CD4-positive, alpha-beta memory T cell (primary cell): ENCODE measurements at regions of chr3 and their contacts with region 1.

Region 1: GRCh38 chr3:30768703-30769685 is 125.5 kb downstream of the GADL1 start:
- DNase-seq: peak; percentile 54 to 62 (median 56)
- H3K4me3 ChIP-seq: no peak overlapping the region
- H3K4me3 Mint-ChIP-seq: no peak overlapping the region
- H3K27ac ChIP-seq: no peak overlapping the region
- H3K27ac Mint-ChIP-seq: peak overlapping the region in 1 of 7 donors; percentile 4
- H3K4me1 ChIP-seq: no peaks in the 10 kb centered on the region
- H3K4me1 Mint-ChIP-seq: peaks cover 0 to 4% (median 2%) of the 10 kb centered on the region in 4 donors
- H3K27me3 ChIP-seq: no peaks in the 10 kb centered on the region
- H3K27me3 Mint-ChIP-seq: peaks cover 2 to 5% of the 10 kb centered on the region in 2 donors

Region 2: GRCh38 chr3:30042274-30042859 is 726.6 kb before region 1 on chr3:
- CTCF ChIA-PET with region 1: interaction called, 8 read pairs
- POLR2A ChIA-PET with region 1: no interaction called
- intact Hi-C with region 1: loop called (anchors 5 kb)
- DNase-seq: peak; percentile 43 to 55 (median 44)
- H3K4me3 ChIP-seq: no peak overlapping the region
- H3K4me3 Mint-ChIP-seq: no peak overlapping the region
- H3K27ac ChIP-seq: no peak overlapping the region
- H3K27ac Mint-ChIP-seq: no peak overlapping the region
- H3K4me1 ChIP-seq: no peaks in the 10 kb centered on the region
- H3K4me1 Mint-ChIP-seq: no peaks in the 10 kb centered on the region
- H3K27me3 ChIP-seq: peaks cover 2% of the 10 kb centered on the region
- H3K27me3 Mint-ChIP-seq: peaks cover 24 to 26% of the 10 kb centered on the region in 2 donors

Region 3: DNA sequence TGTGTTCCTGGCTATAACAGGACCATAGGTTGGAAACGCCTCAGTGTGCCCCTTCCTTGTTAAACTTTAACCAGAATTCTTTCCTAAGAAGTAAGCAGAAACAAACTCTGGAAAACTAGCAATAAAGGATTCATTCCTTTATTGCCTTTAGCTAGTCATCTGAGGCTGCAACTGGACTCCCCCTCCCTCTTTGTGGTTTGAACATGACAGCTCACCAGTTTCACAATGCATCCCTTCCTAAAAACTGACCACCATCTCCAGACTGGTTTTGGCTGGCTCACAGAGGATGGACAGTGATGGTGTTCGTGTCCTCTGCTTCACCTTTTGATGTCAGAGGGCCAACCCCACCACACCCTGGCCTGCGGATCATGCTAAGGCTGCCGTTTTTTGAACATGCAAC is 190.5 kb before region 1 on chr3:
- CTCF ChIA-PET with region 1: no interaction called
- POLR2A ChIA-PET with region 1: no interaction called
- intact Hi-C with region 1: no loop called
- DNase-seq: no peak
- H3K4me3 ChIP-seq: no peak overlapping the region
- H3K4me3 Mint-ChIP-seq: no peak overlapping the region
- H3K27ac ChIP-seq: no peak overlapping the region
- H3K27ac Mint-ChIP-seq: no peak overlapping the region
- H3K4me1 ChIP-seq: no peaks in the 10 kb centered on the region
- H3K4me1 Mint-ChIP-seq: no peaks in the 10 kb centered on the region
- H3K27me3 ChIP-seq: no peaks in the 10 kb centered on the region
- H3K27me3 Mint-ChIP-seq: no peaks in the 10 kb centered on the region

Region 4: DNA sequence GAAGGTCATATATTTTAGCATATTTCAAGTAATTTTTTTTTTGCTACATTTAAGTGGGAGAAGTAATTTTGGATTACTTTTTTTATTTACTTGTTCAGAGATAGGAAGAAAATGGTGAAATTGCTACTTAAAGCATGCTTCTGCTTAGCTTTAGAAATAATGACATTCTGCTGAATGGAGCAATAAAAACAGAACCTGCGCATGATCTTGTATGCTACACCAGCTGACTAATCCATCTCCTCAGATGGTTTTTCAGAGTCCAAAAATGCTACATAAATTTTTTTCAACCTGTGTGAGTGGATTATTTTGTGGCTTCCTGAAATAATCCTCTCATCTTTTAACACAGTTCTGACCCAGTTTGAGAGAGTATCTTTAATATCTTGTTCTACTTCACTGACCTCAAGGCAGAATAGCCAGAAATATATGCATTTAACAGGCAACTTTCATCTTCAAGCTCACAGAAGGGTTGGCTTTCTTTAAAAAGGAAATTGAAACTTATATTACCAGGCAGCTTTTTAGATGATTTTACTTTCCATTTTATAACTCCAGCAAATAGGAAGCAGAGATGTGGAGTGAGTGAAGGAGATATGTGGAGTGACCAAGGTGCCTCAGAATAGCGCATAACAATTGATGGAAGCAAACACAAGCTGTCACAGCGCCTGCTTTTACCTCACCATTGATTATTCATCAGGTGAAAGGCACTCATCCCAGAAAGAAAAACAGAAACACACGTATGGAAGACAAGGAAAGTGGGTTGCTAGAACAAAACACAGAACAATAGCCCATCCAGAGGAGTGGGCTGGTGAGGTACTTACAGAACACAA is 26.0 kb before region 1 on chr3:
- CTCF ChIA-PET with region 1: no interaction called
- POLR2A ChIA-PET with region 1: no interaction called
- intact Hi-C with region 1: no loop called
- DNase-seq: no peak
- H3K4me3 ChIP-seq: no peak overlapping the region
- H3K4me3 Mint-ChIP-seq: no peak overlapping the region
- H3K27ac ChIP-seq: no peak overlapping the region
- H3K27ac Mint-ChIP-seq: peak overlapping the region in 1 of 7 donors; percentile 15
- H3K4me1 ChIP-seq: no peaks in the 10 kb centered on the region
- H3K4me1 Mint-ChIP-seq: peaks cover 0 to 3% (median under 1%) of the 10 kb centered on the region in 4 donors
- H3K27me3 ChIP-seq: no peaks in the 10 kb centered on the region
- H3K27me3 Mint-ChIP-seq: no peaks in the 10 kb centered on the region

Region 5: DNA sequence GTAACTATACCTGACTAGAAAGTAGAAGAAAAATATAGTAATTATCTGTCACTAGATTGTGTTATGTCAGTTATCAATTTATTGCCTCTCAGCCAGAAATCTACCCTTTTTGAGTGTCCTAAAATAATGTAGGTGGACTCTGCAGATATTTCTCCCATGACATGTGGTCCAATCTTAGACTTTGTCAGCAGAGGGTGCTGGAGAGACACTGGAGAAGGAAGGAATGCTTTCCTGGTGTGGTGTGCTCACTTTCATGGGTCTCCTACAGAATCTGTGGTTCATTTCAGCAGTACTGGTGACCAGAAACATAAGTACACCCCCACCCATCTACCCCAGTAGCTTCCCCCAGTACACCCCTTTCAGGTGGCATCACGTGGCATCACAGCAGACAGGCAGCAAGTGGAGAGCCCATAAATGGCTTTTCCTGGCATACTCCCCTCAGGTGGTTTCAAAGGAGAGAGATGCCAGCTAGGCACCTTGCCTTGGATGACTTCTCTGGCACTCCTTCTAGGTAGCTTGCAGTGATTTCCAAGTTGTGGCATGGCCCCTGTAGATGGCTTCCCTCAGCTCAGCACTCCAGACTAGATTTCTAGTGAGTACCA is 10.8 kb after region 1 on chr3:
- CTCF ChIA-PET with region 1: interaction called, 23 read pairs
- POLR2A ChIA-PET with region 1: no interaction called
- intact Hi-C with region 1: no loop called
- DNase-seq: peak in 2 of 5 donors; percentile 8 to 9
- H3K4me3 ChIP-seq: no peak overlapping the region
- H3K4me3 Mint-ChIP-seq: no peak overlapping the region
- H3K27ac ChIP-seq: no peak overlapping the region
- H3K27ac Mint-ChIP-seq: no peak overlapping the region
- H3K4me1 ChIP-seq: no peaks in the 10 kb centered on the region
- H3K4me1 Mint-ChIP-seq: no peaks in the 10 kb centered on the region
- H3K27me3 ChIP-seq: no peaks in the 10 kb centered on the region
- H3K27me3 Mint-ChIP-seq: peaks cover 0 to 8% of the 10 kb centered on the region in 2 donors

Region 6: DNA sequence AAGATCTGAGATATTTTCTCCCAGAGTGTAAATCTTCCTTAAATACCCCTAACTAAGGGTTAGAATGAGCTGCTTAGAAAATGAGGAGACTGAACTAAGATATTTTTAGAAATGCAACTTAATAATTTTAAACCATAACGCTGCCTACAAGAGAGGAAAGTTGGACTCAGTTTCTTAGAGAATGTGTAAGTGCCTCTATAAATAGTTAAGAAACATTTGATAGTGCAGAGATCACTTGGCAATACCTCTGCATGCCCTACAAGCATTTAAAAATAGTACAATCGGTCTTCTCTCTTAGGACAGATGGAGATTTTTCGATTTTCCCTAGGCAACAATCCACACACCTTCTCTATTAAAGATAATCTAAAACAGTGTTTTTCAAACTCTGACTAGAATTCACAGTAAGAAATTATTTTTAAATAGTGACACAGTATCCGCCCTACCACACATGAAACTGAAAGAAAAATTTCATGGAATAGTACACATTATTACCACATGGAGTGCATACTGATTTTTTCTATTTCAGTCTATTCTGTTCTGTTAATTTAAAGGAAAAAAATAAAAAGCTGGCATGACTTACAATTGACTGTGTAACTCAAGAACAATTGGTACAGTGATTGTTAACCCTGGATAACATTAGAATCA is 42.3 kb after region 1 on chr3:
- CTCF ChIA-PET with region 1: no interaction called
- POLR2A ChIA-PET with region 1: no interaction called
- intact Hi-C with region 1: no loop called
- DNase-seq: no peak
- H3K4me3 ChIP-seq: no peak overlapping the region
- H3K4me3 Mint-ChIP-seq: no peak overlapping the region
- H3K27ac ChIP-seq: no peak overlapping the region
- H3K27ac Mint-ChIP-seq: peak overlapping the region in 1 of 7 donors; percentile 48
- H3K4me1 ChIP-seq: no peaks in the 10 kb centered on the region
- H3K4me1 Mint-ChIP-seq: peaks cover 0 to 2% (median under 1%) of the 10 kb centered on the region in 4 donors
- H3K27me3 ChIP-seq: no peaks in the 10 kb centered on the region
- H3K27me3 Mint-ChIP-seq: peaks cover 7 to 11% of the 10 kb centered on the region in 2 donors

Region 7: GRCh38 chr3:31448035-31448881 is 679.3 kb after region 1 on chr3:
- CTCF ChIA-PET with region 1: interaction called, 12 read pairs
- POLR2A ChIA-PET with region 1: no interaction called
- intact Hi-C with region 1: loop called (anchors 2 kb)
- DNase-seq: peak; percentile 15 to 36 (median 29)
- H3K4me3 ChIP-seq: no peak overlapping the region
- H3K4me3 Mint-ChIP-seq: peak overlapping the region in 3 of 8 donors; percentile 3 to 66 (median 42)
- H3K27ac ChIP-seq: no peak overlapping the region
- H3K27ac Mint-ChIP-seq: no peak overlapping the region
- H3K4me1 ChIP-seq: peaks cover 17% of the 10 kb centered on the region
- H3K4me1 Mint-ChIP-seq: peaks cover 11 to 22% (median 16%) of the 10 kb centered on the region in 4 donors
- H3K27me3 ChIP-seq: no peaks in the 10 kb centered on the region
- H3K27me3 Mint-ChIP-seq: peaks cover 0 to 1% of the 10 kb centered on the region in 2 donors

Region 8: GRCh38 chr3:31550452-31551251 is 781.7 kb after region 1 on chr3:
- CTCF ChIA-PET with region 1: interaction called, 4 read pairs
- POLR2A ChIA-PET with region 1: no interaction called
- intact Hi-C with region 1: loop called (anchors 2 kb)
- DNase-seq: peak in 4 of 5 donors; percentile 28 to 40 (median 37)
- H3K4me3 ChIP-seq: no peak overlapping the region
- H3K4me3 Mint-ChIP-seq: peak overlapping the region; percentile 6 to 66 (median 46)
- H3K27ac ChIP-seq: no peak overlapping the region
- H3K27ac Mint-ChIP-seq: peak overlapping the region in 4 of 7 donors; percentile 37 to 85 (median 43)
- H3K4me1 ChIP-seq: peaks cover 84% of the 10 kb centered on the region
- H3K4me1 Mint-ChIP-seq: peaks cover 68 to 93% (median 81%) of the 10 kb centered on the region in 4 donors
- H3K27me3 ChIP-seq: no peaks in the 10 kb centered on the region
- H3K27me3 Mint-ChIP-seq: no peaks in the 10 kb centered on the region

Region 9: GRCh38 chr3:31695280-31696008 is 926.5 kb after region 1 on chr3:
- CTCF ChIA-PET with region 1: interaction called, 5 read pairs
- POLR2A ChIA-PET with region 1: no interaction called
- intact Hi-C with region 1: loop called (anchors 2 kb)
- DNase-seq: peak in 4 of 5 donors; percentile 13 to 27 (median 16)
- H3K4me3 ChIP-seq: no peak overlapping the region
- H3K4me3 Mint-ChIP-seq: no peak overlapping the region
- H3K27ac ChIP-seq: no peak overlapping the region
- H3K27ac Mint-ChIP-seq: no peak overlapping the region
- H3K4me1 ChIP-seq: no peaks in the 10 kb centered on the region
- H3K4me1 Mint-ChIP-seq: no peaks in the 10 kb centered on the region
- H3K27me3 ChIP-seq: no peaks in the 10 kb centered on the region
- H3K27me3 Mint-ChIP-seq: no peaks in the 10 kb centered on the region

Region 10: DNA sequence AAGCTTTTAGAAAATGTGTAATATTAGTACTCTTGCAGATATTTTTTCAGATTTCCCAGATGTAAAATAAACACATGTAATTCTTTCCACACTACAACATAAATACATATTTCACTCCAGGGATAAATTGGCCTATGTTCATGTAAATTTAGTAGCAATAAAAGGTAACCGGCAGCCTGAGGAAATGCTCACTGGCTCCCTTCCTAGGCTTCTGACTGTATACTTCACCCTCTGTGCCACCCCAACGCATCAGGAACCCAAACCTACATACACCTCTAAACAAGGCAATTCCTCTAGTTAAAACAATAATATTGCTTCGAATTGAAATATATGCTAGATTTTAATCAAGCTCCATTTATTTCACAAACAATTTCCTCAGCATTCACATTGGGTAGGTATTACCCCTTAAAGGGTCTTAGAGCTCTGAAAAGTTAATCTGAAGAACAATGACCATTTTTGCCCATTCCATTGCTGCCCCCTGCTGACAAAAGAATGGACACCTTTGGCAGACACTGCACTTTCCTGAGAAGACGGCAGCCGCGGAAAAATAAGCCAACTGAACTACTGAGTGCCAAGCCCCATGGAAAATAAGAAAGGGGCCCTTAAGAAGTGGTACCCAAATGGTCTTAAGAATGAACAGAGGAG is 999.6 kb after region 1 on chr3:
- CTCF ChIA-PET with region 1: interaction called, 39 read pairs
- POLR2A ChIA-PET with region 1: no interaction called
- intact Hi-C with region 1: loop called (anchors 1 kb)
- DNase-seq: peak in 4 of 5 donors; percentile 31 to 43 (median 38)
- H3K4me3 ChIP-seq: no peak overlapping the region
- H3K4me3 Mint-ChIP-seq: peak overlapping the region in 1 of 8 donors; percentile 49
- H3K27ac ChIP-seq: no peak overlapping the region
- H3K27ac Mint-ChIP-seq: no peak overlapping the region
- H3K4me1 ChIP-seq: no peaks in the 10 kb centered on the region
- H3K4me1 Mint-ChIP-seq: peaks cover 0 to 2% (median under 1%) of the 10 kb centered on the region in 4 donors
- H3K27me3 ChIP-seq: no peaks in the 10 kb centered on the region
- H3K27me3 Mint-ChIP-seq: peaks cover 0 to 1% of the 10 kb centered on the region in 2 donors